ENCODE measurements at regions of chr3 and their contacts with region 1.

Region 1: GRCh38 chr3:141710573-141711251 is 27.4 kb upstream of the RNF7 start:
- DNase-seq: peak; percentile 46
- H3K4me3 ChIP-seq: no peak overlapping the region
- CTCF ChIP-seq: no peak

Region 2: DNA sequence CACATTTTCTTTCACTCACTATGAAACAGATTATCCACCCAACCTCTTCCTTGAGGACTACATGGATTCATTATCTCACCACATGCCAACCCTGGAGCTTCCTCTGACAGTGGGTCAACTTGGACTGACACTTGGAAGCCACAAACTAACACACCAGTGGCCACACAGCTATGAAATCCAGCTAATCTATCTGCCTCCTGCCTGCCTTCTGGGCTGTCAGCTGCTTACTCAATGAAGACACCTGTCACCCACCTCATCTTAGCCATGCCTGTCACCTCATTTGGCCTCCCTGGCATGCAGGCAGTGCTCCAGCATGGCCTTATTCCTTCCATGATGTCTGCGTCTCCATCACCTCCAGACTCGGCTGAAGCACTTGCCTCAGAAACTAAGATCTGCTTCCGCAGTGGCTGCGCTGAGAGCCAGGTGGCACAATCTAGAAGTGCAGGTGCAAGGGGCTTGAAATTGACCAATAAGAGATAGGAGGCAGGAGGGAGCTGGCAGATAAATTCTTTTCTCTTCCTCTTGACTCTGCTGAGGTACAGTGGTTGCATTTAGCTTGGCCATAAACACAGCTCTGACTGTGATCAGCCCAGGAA is 77.8 kb before region 1 on chr3:
- in situ Hi-C with region 1: loop called (anchors 5 kb)
- DNase-seq: no peak
- H3K4me3 ChIP-seq: no peak overlapping the region
- CTCF ChIP-seq: no peak